ENCODE measurements at regions of chr18 and their contacts with region 1.

Region 1: GRCh38 chr18:35616664-35617423 is 35.3 kb downstream of the GALNT1 start:
- DNase-seq: peak; percentile 81
- H3K4me3 Mint-ChIP-seq: no peak overlapping the region
- H3K27ac Mint-ChIP-seq: no peak overlapping the region
- H3K4me1 Mint-ChIP-seq: peaks cover 7% of the 10 kb centered on the region
- H3K27me3 Mint-ChIP-seq: no peaks in the 10 kb centered on the region

Region 2: GRCh38 chr18:35580701-35581539 is 35.9 kb before region 1 on chr18:
- CTCF ChIA-PET with region 1: interaction called, 3 read pairs
- POLR2A ChIA-PET with region 1: interaction called, 7 read pairs
- intact Hi-C with region 1: loop called (anchors 1 kb)
- DNase-seq: peak; percentile 61
- H3K4me3 Mint-ChIP-seq: peak overlapping the region; percentile 68
- H3K27ac Mint-ChIP-seq: peak overlapping the region; percentile 53
- H3K4me1 Mint-ChIP-seq: peaks cover 34% of the 10 kb centered on the region
- H3K27me3 Mint-ChIP-seq: peaks cover 25% of the 10 kb centered on the region

Region 3: DNA sequence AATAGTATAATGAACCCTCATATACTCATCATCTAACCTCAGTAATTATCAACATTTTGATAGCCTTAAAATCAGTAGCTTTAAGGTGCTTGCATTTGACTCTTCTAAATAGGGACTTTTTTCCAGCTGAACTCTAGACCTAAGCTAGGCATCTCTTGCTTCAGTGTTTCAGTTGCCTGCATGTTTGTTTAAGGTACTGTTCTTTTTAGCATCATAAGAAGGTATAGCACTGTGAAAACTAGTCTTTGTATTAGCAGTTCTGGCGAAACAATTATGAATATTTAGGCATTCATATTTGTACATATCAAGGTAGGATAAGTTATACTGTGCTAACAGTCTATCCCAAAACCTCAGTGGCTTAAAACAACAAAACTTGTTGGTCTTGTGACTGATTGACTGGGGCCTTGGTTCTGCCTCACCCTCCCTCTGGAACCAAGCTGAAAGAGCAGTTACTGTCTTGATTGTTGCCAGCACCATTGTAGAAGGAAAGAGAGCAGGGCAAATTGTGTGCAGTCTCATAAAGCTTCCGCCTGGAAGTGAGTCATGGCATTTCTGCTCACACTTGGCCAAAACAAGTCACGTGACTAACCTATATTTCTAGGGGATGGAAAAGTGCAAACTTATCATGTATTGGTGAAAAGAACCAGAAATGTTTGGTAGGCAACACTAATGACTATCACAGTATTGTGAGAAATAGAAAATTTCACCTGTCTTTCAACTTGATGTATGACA is 11.0 kb before region 1 on chr18:
- CTCF ChIA-PET with region 1: interaction called, 3 read pairs
- POLR2A ChIA-PET with region 1: no interaction called
- intact Hi-C with region 1: loop called (anchors 1 kb)
- DNase-seq: peak; percentile 24
- H3K4me3 Mint-ChIP-seq: no peak overlapping the region
- H3K27ac Mint-ChIP-seq: peak overlapping the region; percentile 40
- H3K4me1 Mint-ChIP-seq: peaks cover 24% of the 10 kb centered on the region
- H3K27me3 Mint-ChIP-seq: no peaks in the 10 kb centered on the region

Region 4: GRCh38 chr18:35672897-35673296 is 56.1 kb after region 1 on chr18:
- CTCF ChIA-PET with region 1: no interaction called
- POLR2A ChIA-PET with region 1: no interaction called
- intact Hi-C with region 1: no loop called
- DNase-seq: no peak
- H3K4me3 Mint-ChIP-seq: no peak overlapping the region
- H3K27ac Mint-ChIP-seq: no peak overlapping the region
- H3K4me1 Mint-ChIP-seq: no peaks in the 10 kb centered on the region
- H3K27me3 Mint-ChIP-seq: no peaks in the 10 kb centered on the region